Activated naive CD4-positive, alpha-beta T cell treated with anti-CD3 and anti-CD28 coated beads for 36 hours (primary cell): ENCODE measurements at regions of chr14 and their contacts with region 1.

Region 1: GRCh38 chr14:77212943-77213678 is 31.5 kb downstream of the TMEM63C start:
- DNase-seq: peak; percentile 60
- H3K4me3 Mint-ChIP-seq: no peak overlapping the region
- H3K27ac Mint-ChIP-seq: no peak overlapping the region
- H3K4me1 Mint-ChIP-seq: no peaks in the 10 kb centered on the region
- H3K27me3 Mint-ChIP-seq: peaks cover 11% of the 10 kb centered on the region

Region 2: GRCh38 chr14:77133720-77134338 is 79.3 kb before region 1 on chr14:
- CTCF ChIA-PET with region 1: interaction called, 6 read pairs
- intact Hi-C with region 1: loop called (anchors 5 kb)
- DNase-seq: peak; percentile 85
- H3K4me3 Mint-ChIP-seq: no peak overlapping the region
- H3K27ac Mint-ChIP-seq: no peak overlapping the region
- H3K4me1 Mint-ChIP-seq: no peaks in the 10 kb centered on the region
- H3K27me3 Mint-ChIP-seq: peaks cover 57% of the 10 kb centered on the region

Region 3: GRCh38 chr14:77339407-77339806 is 126.3 kb after region 1 on chr14:
- CTCF ChIA-PET with region 1: no interaction called
- intact Hi-C with region 1: no loop called
- DNase-seq: no peak
- H3K4me3 Mint-ChIP-seq: no peak overlapping the region
- H3K27ac Mint-ChIP-seq: no peak overlapping the region
- H3K4me1 Mint-ChIP-seq: no peaks in the 10 kb centered on the region
- H3K27me3 Mint-ChIP-seq: no peaks in the 10 kb centered on the region

Region 4: DNA sequence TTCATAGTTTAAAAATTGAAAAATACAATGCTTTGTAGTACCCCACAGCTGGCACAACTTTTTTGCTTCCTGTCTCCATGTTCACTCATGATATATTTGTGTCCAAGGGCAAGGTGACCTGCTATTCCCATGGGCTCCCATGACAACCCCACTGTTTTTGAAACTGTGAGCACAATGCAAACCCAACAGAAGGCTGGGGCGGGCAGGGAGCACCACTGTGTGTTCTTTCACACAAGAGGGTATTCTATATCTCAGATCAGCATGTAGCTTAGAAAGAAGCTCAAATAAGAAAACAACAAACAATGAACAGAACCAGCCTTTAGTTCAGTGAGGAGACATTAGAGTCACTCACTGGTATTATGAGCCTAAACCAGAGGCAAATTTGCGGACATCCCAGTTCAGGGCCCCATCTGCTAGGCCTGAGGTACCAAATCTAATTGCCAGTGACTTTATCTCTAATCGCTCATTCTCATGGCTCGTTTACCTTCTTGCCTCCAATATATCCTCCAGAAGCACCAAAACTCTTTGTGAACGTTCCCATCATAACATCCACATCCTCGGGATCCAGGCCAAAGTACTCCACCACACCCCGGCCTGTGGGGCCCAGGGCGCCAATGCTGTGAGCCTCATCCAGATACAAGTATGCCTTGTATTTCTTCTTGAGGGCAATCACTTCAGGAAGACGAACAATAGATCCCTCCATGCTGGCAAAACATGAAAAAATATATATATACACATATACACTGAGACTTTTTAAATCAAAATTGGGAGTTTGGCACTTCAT is 341.9 kb after region 1 on chr14:
- CTCF ChIA-PET with region 1: no interaction called
- intact Hi-C with region 1: no loop called
- DNase-seq: no peak
- H3K4me3 Mint-ChIP-seq: no peak overlapping the region
- H3K27ac Mint-ChIP-seq: peak overlapping the region; percentile 58
- H3K4me1 Mint-ChIP-seq: peaks cover 12% of the 10 kb centered on the region
- H3K27me3 Mint-ChIP-seq: no peaks in the 10 kb centered on the region